PC-9 (cell line): ENCODE measurements at regions of chr9 and their contacts with region 1.

Region 1: DNA sequence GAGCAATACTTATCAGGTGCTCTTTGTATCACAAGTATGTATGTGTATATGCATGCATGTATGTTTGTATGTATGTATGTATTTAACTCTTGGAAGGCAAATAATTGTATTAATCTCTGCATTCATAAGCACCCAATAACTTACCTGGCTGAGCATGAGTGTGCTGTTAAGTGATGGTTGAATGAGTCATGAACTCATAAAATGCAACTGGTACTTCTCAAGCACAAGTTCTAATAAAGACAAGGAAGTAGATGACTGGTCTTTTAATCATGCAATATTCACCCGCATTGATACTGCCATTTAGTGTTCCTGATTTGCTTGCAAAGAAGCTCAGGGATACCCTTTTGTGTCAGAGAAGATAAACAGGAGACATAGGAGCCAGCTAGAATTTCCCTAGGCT is 204.9 kb upstream of the TRPM3 start:
- DNase-seq: peak in 1 of 2 experiments; percentile 38
- H3K4me3 ChIP-seq: no peak overlapping the region
- H3K27ac ChIP-seq: no peak overlapping the region
- H3K4me1 ChIP-seq: no peaks in the 10 kb centered on the region
- H3K27me3 ChIP-seq: no peaks in the 10 kb centered on the region
- CTCF ChIP-seq: no peak

Region 2: DNA sequence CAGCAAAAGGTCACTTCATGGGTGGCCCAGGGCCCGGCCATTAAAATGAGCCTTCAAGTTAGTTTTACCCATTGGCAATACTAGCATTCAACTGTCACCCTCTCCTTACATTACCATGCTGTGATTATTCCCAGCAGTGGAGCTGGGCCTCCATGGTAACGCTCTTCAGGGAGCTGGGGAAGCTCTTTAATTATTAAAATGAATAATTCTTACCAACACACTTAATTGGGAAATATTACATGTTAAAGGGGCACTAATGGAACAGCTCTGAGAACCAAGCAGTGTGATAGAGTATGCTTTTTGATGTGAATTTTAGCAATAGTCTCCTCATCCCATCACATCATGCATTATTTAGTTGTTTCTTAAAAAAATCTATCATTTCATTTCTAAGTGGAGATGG is 254.7 kb after region 1 on chr9:
- CTCF ChIA-PET with region 1: no interaction called
- POLR2A ChIA-PET with region 1: interaction called, 25 read pairs
- intact Hi-C with region 1: no loop called
- DNase-seq: no peak
- H3K4me3 ChIP-seq: no peak overlapping the region
- H3K27ac ChIP-seq: no peak overlapping the region
- H3K4me1 ChIP-seq: no peaks in the 10 kb centered on the region
- H3K27me3 ChIP-seq: no peaks in the 10 kb centered on the region
- CTCF ChIP-seq: no peak